Mucosa of descending colon (tissue), 3 donors: ENCODE measurements at regions of chr12 and their contacts with region 1.

Region 1: GRCh38 chr12:15522565-15523187 is 200.4 kb downstream of the PTPRO start:
- DNase-seq: no peak
- ATAC-seq: peak; percentile 31
- H3K4me3 ChIP-seq: no peak overlapping the region
- H3K4me1 ChIP-seq: no peaks in the 10 kb centered on the region
- CTCF ChIP-seq: no peak

Region 2: GRCh38 chr12:15276088-15276698 is 246.5 kb before region 1 on chr12:
- intact Hi-C with region 1: loop called (anchors 5 to 10 kb)
- DNase-seq: peak in 1 of 3 donors; percentile 59
- ATAC-seq: peak; percentile 56
- H3K4me3 ChIP-seq: no peak overlapping the region
- H3K4me1 ChIP-seq: no peaks in the 10 kb centered on the region
- CTCF ChIP-seq: peak; percentile 45